Breast epithelium (tissue), 4 donors: ENCODE measurements at regions of chr3 and their contacts with region 1.

Region 1: DNA sequence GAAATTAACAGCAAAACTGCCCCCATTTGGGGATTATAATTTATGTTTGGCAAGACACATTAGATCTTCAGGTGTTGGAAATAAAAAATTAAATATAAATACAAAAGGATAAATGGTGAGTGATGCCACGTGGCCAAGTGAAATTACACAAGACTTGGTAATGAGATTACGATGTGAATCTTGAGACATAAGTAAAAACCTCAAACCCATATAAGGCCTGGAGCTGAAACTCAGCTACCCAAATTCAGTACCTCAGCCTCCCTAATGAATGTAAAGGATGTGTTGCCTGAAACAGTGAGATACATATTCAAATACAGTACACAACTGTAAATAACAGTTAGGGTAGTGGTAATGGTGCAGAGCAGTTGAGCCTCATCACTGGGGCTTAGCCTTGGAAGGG is 1146.6 kb downstream of the OTOL1 start:
- DNase-seq: no peak
- H3K4me3 ChIP-seq: no peak overlapping the region
- H3K27ac ChIP-seq: no peak overlapping the region
- H3K4me1 ChIP-seq: no peaks in the 10 kb centered on the region
- H3K27me3 ChIP-seq: no peaks in the 10 kb centered on the region
- CTCF ChIP-seq: no peak
- POLR2A ChIP-seq: no peak

Region 2: GRCh38 chr3:161939918-161940620 is 703.2 kb before region 1 on chr3:
- intact Hi-C with region 1: no loop called
- DNase-seq: no peak
- H3K4me3 ChIP-seq: peak overlapping the region in 1 of 3 donors; percentile 2
- H3K27ac ChIP-seq: peak overlapping the region in 1 of 2 donors; percentile 38
- H3K4me1 ChIP-seq: no peaks in the 10 kb centered on the region
- H3K27me3 ChIP-seq: no peaks in the 10 kb centered on the region
- CTCF ChIP-seq: no peak
- POLR2A ChIP-seq: no peak

Region 3: DNA sequence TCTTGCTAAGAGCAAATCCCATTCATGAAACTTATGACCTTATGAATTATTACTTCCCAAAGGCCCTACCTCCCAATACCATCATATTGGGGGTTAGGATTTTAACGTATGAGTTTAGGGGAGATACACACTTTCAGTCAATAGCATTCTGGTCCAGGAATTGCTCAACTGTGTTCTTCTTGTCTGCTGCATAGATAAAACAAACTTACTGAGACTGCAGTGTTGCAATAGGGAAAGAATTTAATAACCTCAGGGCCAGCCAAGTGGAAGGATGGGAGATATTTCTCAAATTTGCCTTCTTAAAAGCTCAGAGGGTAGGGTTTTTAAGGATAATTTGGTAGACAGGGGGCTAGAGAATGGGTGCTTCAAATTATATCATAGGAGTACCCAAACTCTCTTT is 520.8 kb before region 1 on chr3:
- intact Hi-C with region 1: loop called (anchors 5 kb)
- DNase-seq: no peak
- H3K4me3 ChIP-seq: no peak overlapping the region
- H3K27ac ChIP-seq: no peak overlapping the region
- H3K4me1 ChIP-seq: no peaks in the 10 kb centered on the region
- H3K27me3 ChIP-seq: no peaks in the 10 kb centered on the region
- CTCF ChIP-seq: no peak
- POLR2A ChIP-seq: no peak

Region 4: DNA sequence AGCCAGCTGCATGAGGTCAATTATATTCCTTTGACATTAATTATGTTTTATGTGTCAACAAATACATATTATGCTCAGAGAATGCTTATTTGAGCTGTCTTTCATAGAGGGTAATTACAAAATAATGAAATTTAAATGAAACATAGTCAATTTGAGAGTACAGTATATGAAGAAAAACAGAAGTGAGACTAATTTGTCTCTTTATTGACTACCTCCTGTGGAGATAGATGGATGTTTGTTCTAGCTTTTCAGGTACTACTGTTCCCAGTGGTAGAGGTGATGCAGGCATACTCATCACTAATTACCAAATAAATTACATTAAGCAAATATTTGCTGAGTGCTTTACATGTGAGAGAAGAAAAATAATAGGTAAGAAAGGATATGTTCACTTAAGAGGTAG is 17.1 kb before region 1 on chr3:
- intact Hi-C with region 1: loop called (anchors 2 kb)
- DNase-seq: no peak
- H3K4me3 ChIP-seq: no peak overlapping the region
- H3K27ac ChIP-seq: no peak overlapping the region
- H3K4me1 ChIP-seq: no peaks in the 10 kb centered on the region
- H3K27me3 ChIP-seq: no peaks in the 10 kb centered on the region
- CTCF ChIP-seq: no peak
- POLR2A ChIP-seq: no peak